Sigmoid colon (tissue), 7 donors: ENCODE measurements at regions of chr6 and their contacts with region 1.

Region 1: GRCh38 chr6:44074439-44075136 is 52.7 kb downstream of the MRPL14 start:
- DNase-seq: peak; percentile 87
- H3K4me3 ChIP-seq: no peak overlapping the region
- H3K27ac ChIP-seq: peak overlapping the region; percentile 71 to 83 (median 81)
- H3K4me1 ChIP-seq: peaks cover 0 to 51% (median 35%) of the 10 kb centered on the region in 4 donors
- H3K27me3 ChIP-seq: peaks cover 0 to 7% (median 0%) of the 10 kb centered on the region in 3 donors
- CTCF ChIP-seq: peak; percentile 86 to 98 (median 92)
- EP300 ChIP-seq: no peak
- POLR2A ChIP-seq: no peak

Region 2: GRCh38 chr6:43608310-43608763 is 466.3 kb before region 1 on chr6:
- intact Hi-C with region 1: loop called (anchors 5 kb)
- DNase-seq: no peak
- H3K4me3 ChIP-seq: no peak overlapping the region
- H3K27ac ChIP-seq: no peak overlapping the region
- H3K4me1 ChIP-seq: no peaks in the 10 kb centered on the region
- H3K27me3 ChIP-seq: no peaks in the 10 kb centered on the region
- CTCF ChIP-seq: peak; percentile 38 to 73 (median 63)
- EP300 ChIP-seq: no peak
- POLR2A ChIP-seq: no peak

Region 3: GRCh38 chr6:43667245-43668150 is 407.1 kb before region 1 on chr6:
- intact Hi-C with region 1: loop called (anchors 1 kb)
- DNase-seq: peak; percentile 88
- H3K4me3 ChIP-seq: peak overlapping the region in 2 of 4 donors; percentile 1 to 13
- H3K27ac ChIP-seq: no peak overlapping the region
- H3K4me1 ChIP-seq: peaks cover 0 to 37% (median 34%) of the 10 kb centered on the region in 4 donors
- H3K27me3 ChIP-seq: no peaks in the 10 kb centered on the region
- CTCF ChIP-seq: peak; percentile 86 to 97 (median 92)
- EP300 ChIP-seq: no peak
- POLR2A ChIP-seq: no peak

Region 4: GRCh38 chr6:43972913-43973300 is 101.7 kb before region 1 on chr6:
- intact Hi-C with region 1: loop called (anchors 1 kb)
- DNase-seq: peak; percentile 91
- H3K4me3 ChIP-seq: no peak overlapping the region
- H3K27ac ChIP-seq: peak overlapping the region; percentile 73 to 86 (median 78)
- H3K4me1 ChIP-seq: peaks cover 0 to 34% (median 31%) of the 10 kb centered on the region in 4 donors
- H3K27me3 ChIP-seq: no peaks in the 10 kb centered on the region
- CTCF ChIP-seq: no peak
- EP300 ChIP-seq: no peak
- POLR2A ChIP-seq: no peak

Region 5: GRCh38 chr6:44002593-44003344 is 71.8 kb before region 1 on chr6:
- intact Hi-C with region 1: loop called (anchors 5 kb)
- DNase-seq: no peak
- H3K4me3 ChIP-seq: peak overlapping the region; percentile 17 to 46 (median 40)
- H3K27ac ChIP-seq: peak overlapping the region in 1 of 4 donors; percentile 19
- H3K4me1 ChIP-seq: peaks cover 0 to 23% (median 14%) of the 10 kb centered on the region in 4 donors
- H3K27me3 ChIP-seq: peaks cover 4 to 27% (median 20%) of the 10 kb centered on the region in 3 donors
- CTCF ChIP-seq: no peak
- EP300 ChIP-seq: no peak
- POLR2A ChIP-seq: no peak